ENCODE measurements at regions of chr14 and their contacts with region 1.

Region 1: DNA sequence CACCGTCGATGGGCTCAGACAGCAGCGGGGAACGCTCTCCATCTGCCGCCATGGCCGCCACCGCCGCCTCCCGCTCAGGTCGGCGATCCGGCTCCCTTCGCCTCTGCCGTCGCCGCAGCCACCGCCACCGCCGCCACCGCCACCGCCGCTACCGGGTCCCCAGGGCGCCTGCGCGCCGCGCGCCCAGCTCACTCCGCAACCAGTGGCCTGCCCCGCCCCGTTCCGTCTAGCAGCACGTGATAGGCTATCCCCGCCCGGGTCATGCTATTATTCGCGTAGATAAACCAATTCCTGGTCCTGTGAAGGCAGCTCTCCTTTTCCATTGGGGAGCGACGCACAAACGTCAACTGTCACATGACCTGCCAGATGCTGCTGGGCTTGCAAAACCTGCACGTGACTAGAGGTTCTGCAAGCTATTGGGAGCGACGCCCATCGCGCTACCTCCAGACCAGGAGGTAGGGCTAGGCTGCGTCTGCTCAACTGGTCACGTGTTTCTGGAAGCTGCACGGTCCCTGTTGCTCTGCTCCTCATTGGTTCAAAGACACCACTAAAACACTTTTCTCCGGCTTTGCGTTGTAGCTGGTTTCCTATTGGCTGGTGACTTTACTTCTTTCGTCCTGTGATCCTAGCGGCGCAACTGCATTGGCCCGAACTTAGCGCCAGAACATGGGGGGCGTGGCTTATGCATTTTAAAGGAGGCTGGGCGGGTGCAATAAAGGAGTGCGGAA is at the start of gene PIP4P1:
- DNase-seq: peak; percentile 98
- H3K4me3 Mint-ChIP-seq: peak within 1 kb of the TSS; percentile 83
- H3K27ac Mint-ChIP-seq: peak within 1 kb of the TSS; percentile 100
- H3K4me1 Mint-ChIP-seq: peaks cover 19% of the 10 kb centered on the region
- H3K27me3 Mint-ChIP-seq: no peaks in the 10 kb centered on the region
- CTCF ChIP-seq: no peak
- total RNA-seq, gene PIP4P1: 27.0 and 33.8 TPM in 2 replicates

Region 2: GRCh38 chr14:20195911-20196310 is 265.5 kb before region 1 on chr14:
- CTCF ChIA-PET with region 1: no interaction called
- intact Hi-C with region 1: no loop called
- DNase-seq: no peak
- H3K4me3 Mint-ChIP-seq: no peak overlapping the region
- H3K27ac Mint-ChIP-seq: no peak overlapping the region
- H3K4me1 Mint-ChIP-seq: peaks cover 10% of the 10 kb centered on the region
- H3K27me3 Mint-ChIP-seq: no peaks in the 10 kb centered on the region
- CTCF ChIP-seq: no peak

Region 3: GRCh38 chr14:20317720-20318119 is 143.7 kb before region 1 on chr14:
- CTCF ChIA-PET with region 1: no interaction called
- intact Hi-C with region 1: no loop called
- DNase-seq: no peak
- H3K4me3 Mint-ChIP-seq: no peak overlapping the region
- H3K27ac Mint-ChIP-seq: no peak overlapping the region
- H3K4me1 Mint-ChIP-seq: no peaks in the 10 kb centered on the region
- H3K27me3 Mint-ChIP-seq: no peaks in the 10 kb centered on the region
- CTCF ChIP-seq: no peak

Region 4: DNA sequence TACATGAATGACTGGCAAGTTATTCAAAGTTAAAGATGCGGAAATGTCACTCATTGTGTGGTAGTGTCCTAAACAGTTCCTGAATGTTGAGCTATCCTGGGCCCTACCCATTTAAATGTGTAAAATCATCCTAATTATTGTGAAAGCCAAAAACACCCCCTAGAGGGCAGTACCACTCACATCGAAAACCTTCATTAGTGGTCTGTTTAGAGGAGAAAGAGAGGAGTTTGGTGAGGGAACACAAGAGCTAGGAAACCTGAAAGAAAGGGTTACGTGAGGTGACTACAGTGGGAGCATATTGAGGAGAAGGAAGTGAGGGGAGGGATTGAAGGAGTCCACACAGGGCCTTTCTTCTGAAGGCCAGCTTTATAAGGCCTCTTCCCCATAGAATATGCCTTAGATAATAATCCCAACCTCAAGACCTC is 45.6 kb before region 1 on chr14:
- CTCF ChIA-PET with region 1: interaction called, 14 read pairs
- intact Hi-C with region 1: loop called (anchors 2 kb)
- DNase-seq: peak; percentile 55
- H3K4me3 Mint-ChIP-seq: no peak overlapping the region
- H3K27ac Mint-ChIP-seq: peak overlapping the region; percentile 18
- H3K4me1 Mint-ChIP-seq: peaks cover 36% of the 10 kb centered on the region
- H3K27me3 Mint-ChIP-seq: no peaks in the 10 kb centered on the region
- CTCF ChIP-seq: peak; percentile 30